PC-3 (cell line): ENCODE measurements at regions of chr4 and their contacts with region 1.

Region 1: GRCh38 chr4:172830295-172830764 is 338.3 kb upstream of the GALNT7 start:
- DNase-seq: peak; percentile 62
- ATAC-seq: no peak
- H3K4me3 ChIP-seq: no peak overlapping the region
- H3K27ac ChIP-seq: no peak overlapping the region
- H3K4me1 ChIP-seq: peaks cover 6% of the 10 kb centered on the region; the same call in 1 of the 2 replicates
- H3K27me3 ChIP-seq: no peaks in the 10 kb centered on the region
- CTCF ChIP-seq: peak; percentile 69

Region 2: DNA sequence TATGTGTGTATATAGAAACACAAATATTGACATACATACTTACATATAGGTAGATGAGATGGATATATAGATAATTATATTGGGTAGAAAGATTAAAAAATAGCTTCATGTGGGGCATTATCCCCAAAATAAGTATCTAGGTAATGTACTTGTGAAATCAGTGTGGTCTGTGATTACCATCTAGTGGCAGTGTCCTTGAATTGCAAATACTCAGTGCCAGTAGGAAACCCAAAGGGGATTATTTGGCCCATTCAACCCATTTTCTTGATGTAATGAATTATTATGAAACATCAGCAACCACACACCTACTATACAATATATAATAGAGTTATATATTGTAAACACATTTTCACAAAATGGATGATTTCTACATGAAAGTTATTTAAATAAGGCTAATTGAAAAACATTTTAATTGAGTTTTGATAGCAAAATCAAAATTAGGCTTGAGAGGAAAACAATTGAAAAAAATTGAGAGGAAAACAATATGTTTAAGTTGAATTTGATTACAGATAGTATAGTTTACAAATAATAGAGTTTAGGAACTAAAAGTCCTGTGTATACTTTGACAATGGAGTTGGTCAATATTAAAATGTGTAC is 627.8 kb before region 1 on chr4:
- CTCF ChIA-PET with region 1: no interaction called
- POLR2A ChIA-PET with region 1: no interaction called
- intact Hi-C with region 1: loop called (anchors 10 kb)
- DNase-seq: peak; percentile 40
- ATAC-seq: no peak
- H3K4me3 ChIP-seq: no peak overlapping the region
- H3K27ac ChIP-seq: no peak overlapping the region
- H3K4me1 ChIP-seq: no peaks in the 10 kb centered on the region
- H3K27me3 ChIP-seq: no peaks in the 10 kb centered on the region; the same call in 1 of the 2 replicates
- CTCF ChIP-seq: peak; percentile 67

Region 3: GRCh38 chr4:172850838-172851237 is 20.5 kb after region 1 on chr4:
- CTCF ChIA-PET with region 1: no interaction called
- POLR2A ChIA-PET with region 1: no interaction called
- intact Hi-C with region 1: no loop called
- DNase-seq: peak; percentile 84
- ATAC-seq: peak; percentile 90
- H3K4me3 ChIP-seq: no peak overlapping the region
- H3K27ac ChIP-seq: peak overlapping the region; percentile 80
- H3K4me1 ChIP-seq: peaks cover 24% of the 10 kb centered on the region
- H3K27me3 ChIP-seq: no peaks in the 10 kb centered on the region
- CTCF ChIP-seq: no peak

Region 4: DNA sequence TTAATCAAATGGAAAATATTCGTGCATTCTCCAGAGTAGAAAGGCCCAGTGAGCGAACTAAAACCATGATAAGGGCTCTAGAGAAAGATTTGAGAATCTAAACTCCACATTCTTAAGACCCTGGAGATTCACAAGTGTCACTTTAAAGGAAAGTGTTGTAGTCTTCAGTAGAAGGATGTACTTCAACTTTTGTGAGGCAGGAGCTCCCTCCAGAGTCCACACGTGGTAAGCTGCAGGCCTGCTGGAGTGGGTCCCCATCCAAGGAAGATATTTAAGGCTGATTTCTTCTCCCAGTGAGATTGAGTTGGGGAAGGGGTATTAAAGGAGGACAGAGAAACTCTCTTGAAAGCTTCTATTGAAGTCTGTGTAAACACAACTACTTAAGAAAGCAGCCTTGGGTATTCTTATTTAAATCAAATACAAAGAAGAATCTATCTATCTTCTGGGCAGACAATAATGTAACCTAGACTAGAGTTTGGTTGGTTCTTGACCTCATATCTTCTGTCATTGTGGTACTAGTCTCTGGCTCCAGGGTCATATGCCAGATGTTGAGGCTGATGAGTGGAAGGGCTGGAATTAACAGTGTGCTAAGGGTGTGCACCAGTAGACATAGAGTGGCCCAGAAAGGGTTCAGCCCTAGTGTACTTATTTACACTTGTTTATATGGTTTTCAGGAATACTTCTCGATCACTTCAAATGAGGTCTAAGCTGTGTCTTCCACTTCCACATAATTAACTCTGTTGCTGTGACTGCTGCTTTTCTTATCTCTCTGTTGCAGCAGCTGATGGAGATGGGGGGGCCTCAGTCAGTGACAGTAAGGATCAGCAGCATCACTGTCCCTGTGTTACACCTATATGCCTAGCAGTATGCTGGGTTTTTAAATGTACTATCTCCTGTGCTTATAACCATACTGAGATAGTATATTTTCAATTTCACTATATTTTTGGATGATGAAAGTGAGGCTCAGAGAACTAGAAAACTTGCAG is 427.7 kb after region 1 on chr4:
- CTCF ChIA-PET with region 1: no interaction called
- POLR2A ChIA-PET with region 1: no interaction called
- intact Hi-C with region 1: loop called (anchors 10 kb)
- DNase-seq: peak; percentile 73
- ATAC-seq: peak; percentile 95
- H3K4me3 ChIP-seq: no peak overlapping the region
- H3K27ac ChIP-seq: no peak overlapping the region
- H3K4me1 ChIP-seq: peaks cover under 1% of the 10 kb centered on the region; the same call in 1 of the 2 replicates
- H3K27me3 ChIP-seq: no peaks in the 10 kb centered on the region
- CTCF ChIP-seq: peak; percentile 89

Region 5: GRCh38 chr4:173450281-173450680 is 620.0 kb after region 1 on chr4:
- CTCF ChIA-PET with region 1: no interaction called
- POLR2A ChIA-PET with region 1: no interaction called
- intact Hi-C with region 1: no loop called
- DNase-seq: no peak
- ATAC-seq: no peak
- H3K4me3 ChIP-seq: no peak overlapping the region
- H3K27ac ChIP-seq: no peak overlapping the region
- H3K4me1 ChIP-seq: no peaks in the 10 kb centered on the region
- H3K27me3 ChIP-seq: no peaks in the 10 kb centered on the region
- CTCF ChIP-seq: no peak